GM23248 (cell line): ENCODE measurements at regions of chr16 and their contacts with region 1.

Region 1: GRCh38 chr16:51854401-51854951 is 692.5 kb downstream of the TOX3 start:
- DNase-seq: no peak
- H3K4me3 ChIP-seq: no peak overlapping the region
- H3K27ac ChIP-seq: no peak overlapping the region
- H3K4me1 ChIP-seq: no peaks in the 10 kb centered on the region
- H3K27me3 ChIP-seq: no peaks in the 10 kb centered on the region

Region 2: DNA sequence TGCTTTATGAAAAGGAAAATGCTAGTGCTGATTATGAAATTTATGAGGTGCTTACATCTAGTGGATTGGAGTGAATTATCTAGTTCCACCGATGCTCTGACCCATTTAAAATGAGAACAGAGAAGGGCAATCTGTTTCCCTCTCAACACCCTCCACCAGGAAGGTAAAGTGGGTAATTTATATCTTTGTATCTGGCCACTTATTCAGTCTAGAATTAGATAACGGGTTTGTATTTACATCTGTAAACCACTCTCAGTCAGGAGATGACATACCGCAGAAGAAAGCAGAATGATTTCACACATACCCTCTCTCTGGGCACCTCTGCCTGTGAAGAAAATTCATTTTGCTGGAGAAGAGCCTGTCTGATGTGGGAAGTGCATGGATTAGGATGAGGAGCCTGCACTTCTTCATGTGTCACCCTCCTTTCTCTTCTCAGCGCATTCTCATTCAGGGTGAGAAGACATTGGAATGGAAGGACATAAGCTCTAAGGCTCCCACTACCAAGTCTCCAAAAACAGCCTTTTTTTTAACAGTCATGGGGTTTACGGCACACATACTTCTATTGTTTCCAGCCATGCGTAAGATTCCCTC is 56.7 kb before region 1 on chr16:
- in situ Hi-C with region 1: loop called (anchors 10 kb)
- DNase-seq: no peak
- H3K4me3 ChIP-seq: no peak overlapping the region
- H3K27ac ChIP-seq: no peak overlapping the region
- H3K4me1 ChIP-seq: no peaks in the 10 kb centered on the region
- H3K27me3 ChIP-seq: peaks cover 6% of the 10 kb centered on the region; the same call in 1 of the 2 replicates

Region 3: GRCh38 chr16:51916231-51916630 is 61.8 kb after region 1 on chr16:
- in situ Hi-C with region 1: no loop called
- DNase-seq: no peak
- H3K4me3 ChIP-seq: no peak overlapping the region
- H3K27ac ChIP-seq: no peak overlapping the region
- H3K4me1 ChIP-seq: no peaks in the 10 kb centered on the region
- H3K27me3 ChIP-seq: peaks cover 5% of the 10 kb centered on the region; the same call in 1 of the 2 replicates

Region 4: GRCh38 chr16:51982715-51983680 is 128.5 kb after region 1 on chr16:
- in situ Hi-C with region 1: no loop called
- DNase-seq: peak; percentile 73
- H3K4me3 ChIP-seq: no peak overlapping the region
- H3K27ac ChIP-seq: no peak overlapping the region
- H3K4me1 ChIP-seq: no peaks in the 10 kb centered on the region
- H3K27me3 ChIP-seq: no peaks in the 10 kb centered on the region